Breast epithelium (tissue), 4 donors: ENCODE measurements at regions of chr2 and their contacts with region 1.

Region 1: GRCh38 chr2:74714696-74715077 is 60.6 kb downstream of the SEMA4F start:
- DNase-seq: no peak
- H3K4me3 ChIP-seq: peak overlapping the region in 2 of 3 donors; percentile 60 to 74
- H3K27ac ChIP-seq: no peak overlapping the region
- H3K4me1 ChIP-seq: no peaks in the 10 kb centered on the region
- H3K27me3 ChIP-seq: no peaks in the 10 kb centered on the region
- CTCF ChIP-seq: no peak
- POLR2A ChIP-seq: no peak

Region 2: GRCh38 chr2:74874851-74875321 is 160.2 kb after region 1 on chr2:
- intact Hi-C with region 1: loop called (anchors 5 kb)
- DNase-seq: no peak
- H3K4me3 ChIP-seq: no peak overlapping the region
- H3K27ac ChIP-seq: peak overlapping the region; percentile 52 to 72
- H3K4me1 ChIP-seq: no peaks in the 10 kb centered on the region
- H3K27me3 ChIP-seq: no peaks in the 10 kb centered on the region
- CTCF ChIP-seq: no peak
- POLR2A ChIP-seq: no peak

Region 3: GRCh38 chr2:74927621-74928020 is 212.9 kb after region 1 on chr2:
- intact Hi-C with region 1: no loop called
- DNase-seq: no peak
- H3K4me3 ChIP-seq: no peak overlapping the region
- H3K27ac ChIP-seq: no peak overlapping the region
- H3K4me1 ChIP-seq: no peaks in the 10 kb centered on the region
- H3K27me3 ChIP-seq: no peaks in the 10 kb centered on the region
- CTCF ChIP-seq: no peak
- POLR2A ChIP-seq: no peak